ENCODE measurements at regions of chr2 and their contacts with region 1.

Region 1: DNA sequence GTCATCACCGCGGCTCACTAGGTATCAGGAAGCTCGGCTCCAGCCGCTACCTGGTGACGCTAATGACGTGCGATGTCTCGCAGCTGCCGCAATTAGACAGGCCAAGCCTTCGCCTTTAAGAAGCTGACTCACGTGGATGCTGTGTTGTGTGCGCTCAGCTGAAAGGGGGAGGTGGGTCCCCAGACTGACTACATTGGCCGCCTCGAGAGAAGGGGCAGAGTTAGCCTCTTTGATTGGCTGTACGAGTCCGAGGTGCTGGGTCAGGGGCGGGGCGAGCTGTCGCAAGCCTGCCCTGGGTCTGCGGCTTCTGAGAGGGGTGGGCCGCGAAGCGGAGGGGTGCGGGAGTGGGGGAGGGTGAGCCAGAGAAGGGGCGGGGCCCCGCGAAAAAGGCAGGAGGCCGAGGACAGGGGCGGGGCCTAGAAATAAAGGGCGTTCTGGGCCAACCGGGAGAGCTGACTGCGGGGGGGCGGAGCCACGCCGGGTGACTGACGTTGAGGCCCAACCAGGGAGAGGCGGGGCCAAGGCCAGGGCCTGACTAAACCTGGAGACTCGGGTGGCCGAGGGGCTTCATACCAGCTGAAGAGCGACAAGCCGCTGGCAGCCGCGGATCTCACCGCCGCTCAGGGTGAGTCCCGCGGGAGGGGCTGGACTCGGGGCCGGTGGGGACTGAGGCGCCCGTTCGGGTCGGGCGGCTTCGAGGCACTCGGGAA is at the start of gene YPEL5:
- DNase-seq: peak; percentile 99
- H3K4me3 Mint-ChIP-seq: peak within 1 kb of the TSS; percentile 84
- H3K27ac Mint-ChIP-seq: peak within 1 kb of the TSS; percentile 95
- H3K4me1 Mint-ChIP-seq: peaks cover 56% of the 10 kb centered on the region
- H3K27me3 Mint-ChIP-seq: no peaks in the 10 kb centered on the region
- total RNA-seq, gene YPEL5: 28.4 to 33.3 TPM

Region 2: GRCh38 chr2:28751252-28751955 is 1395.2 kb before region 1 on chr2 and contains the start of gene PPP1CB:
- CTCF ChIA-PET with region 1: no interaction called
- intact Hi-C with region 1: loop called (anchors 5 kb)
- DNase-seq: peak; percentile 94
- H3K4me3 Mint-ChIP-seq: peak within 1 kb of the TSS; percentile 91
- H3K27ac Mint-ChIP-seq: peak within 1 kb of the TSS; percentile 95
- H3K4me1 Mint-ChIP-seq: peaks cover 50% of the 10 kb centered on the region
- H3K27me3 Mint-ChIP-seq: no peaks in the 10 kb centered on the region
- total RNA-seq, gene PPP1CB: 235 to 239 TPM

Region 3: DNA sequence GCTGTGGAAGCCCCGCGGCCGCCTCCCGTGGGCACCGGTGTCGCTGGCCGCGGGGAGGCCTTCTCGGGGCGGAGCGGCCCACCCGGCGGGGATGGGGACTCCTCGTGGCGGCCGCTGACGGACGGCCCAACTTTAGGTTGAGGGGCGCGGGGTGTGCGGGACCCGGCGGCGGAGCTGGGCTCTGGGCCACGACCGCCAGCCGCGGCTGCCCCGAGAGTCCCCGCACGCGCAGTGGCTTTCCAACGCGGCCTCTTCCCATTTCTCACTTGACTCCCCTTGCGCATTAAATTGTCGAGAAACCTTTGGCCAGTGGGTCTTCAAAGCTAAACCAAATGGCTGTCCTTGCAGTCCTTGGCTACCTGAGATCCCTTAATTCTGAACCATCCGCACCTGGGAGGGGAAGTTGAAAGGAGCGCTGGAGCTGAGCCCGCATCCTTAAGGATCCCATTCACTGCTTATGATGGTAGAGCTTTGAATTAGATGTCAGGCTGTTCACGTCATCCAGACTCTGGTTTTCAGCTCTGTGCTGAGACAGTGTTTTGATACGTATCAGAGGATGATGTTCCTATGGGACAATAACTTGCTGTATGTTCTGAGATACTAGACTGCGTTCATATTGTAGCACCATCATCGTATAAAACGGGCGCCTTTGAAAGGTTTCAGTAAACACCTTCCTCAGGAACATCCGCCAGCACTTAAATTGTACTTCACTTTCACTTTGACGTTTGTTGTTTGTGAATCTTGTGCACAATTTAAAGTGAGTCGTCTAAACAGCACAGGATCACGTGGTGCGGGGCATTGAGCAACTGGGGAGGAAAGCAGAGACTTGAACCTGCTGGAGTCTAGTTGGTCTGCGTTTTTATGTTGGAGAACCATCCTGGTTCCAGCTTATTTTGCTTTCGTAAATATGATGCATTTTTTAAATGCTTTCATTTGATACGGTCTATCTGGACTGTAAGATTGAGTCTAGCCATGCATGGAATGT is 1030.5 kb before region 1 on chr2:
- CTCF ChIA-PET with region 1: no interaction called
- intact Hi-C with region 1: loop called (anchors 5 kb)
- DNase-seq: peak; percentile 90
- H3K4me3 Mint-ChIP-seq: peak overlapping the region; percentile 90
- H3K27ac Mint-ChIP-seq: peak overlapping the region; percentile 87
- H3K4me1 Mint-ChIP-seq: peaks cover 52% of the 10 kb centered on the region
- H3K27me3 Mint-ChIP-seq: peaks cover 3% of the 10 kb centered on the region

Region 4: DNA sequence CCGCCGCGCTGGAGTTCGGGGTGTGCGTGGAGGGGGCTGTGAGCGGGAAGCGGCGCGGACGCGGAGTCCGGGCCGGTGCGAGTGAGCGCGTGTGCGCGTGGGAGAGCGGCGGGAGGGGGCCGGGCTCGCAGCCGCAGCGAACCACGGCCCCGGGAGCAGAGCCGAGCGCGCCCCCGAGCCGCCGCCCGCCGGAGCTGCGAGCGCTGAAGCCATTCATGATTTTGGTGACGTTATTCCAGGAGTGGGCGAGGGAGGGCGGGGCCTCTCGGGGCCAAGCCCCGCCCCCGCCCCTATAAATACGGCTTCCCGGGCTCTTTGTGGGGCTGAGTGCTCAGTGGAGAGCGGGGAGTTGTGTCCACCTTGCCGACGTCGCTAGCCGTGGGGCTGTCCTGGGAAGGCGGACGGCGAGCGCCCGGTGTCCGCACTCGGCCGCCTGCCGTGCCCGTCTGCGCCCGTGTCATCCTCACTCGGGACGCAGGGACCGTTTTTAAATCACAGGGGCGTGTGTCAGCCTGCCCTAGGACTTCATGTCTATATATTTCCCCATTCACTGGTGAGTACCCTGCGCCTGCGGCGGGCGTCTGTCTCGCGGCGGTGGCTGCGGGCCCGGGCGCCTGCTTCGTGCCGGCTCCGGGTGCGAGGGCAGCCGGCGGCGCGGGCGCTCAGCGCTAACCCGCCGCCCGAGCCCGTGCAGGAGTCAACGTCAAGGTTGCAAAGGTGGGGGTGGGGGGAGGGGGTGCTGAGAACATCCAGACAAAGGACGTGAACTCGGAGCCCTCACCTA is 84.8 kb after region 1 on chr2 and contains the start of gene LBH:
- CTCF ChIA-PET with region 1: interaction called, 4 read pairs
- intact Hi-C with region 1: loop called (anchors 1 kb)
- DNase-seq: peak; percentile 90
- H3K4me3 Mint-ChIP-seq: peak within 1 kb of the TSS; percentile 83
- H3K27ac Mint-ChIP-seq: peak within 1 kb of the TSS; percentile 74
- H3K4me1 Mint-ChIP-seq: peaks cover 56% of the 10 kb centered on the region
- H3K27me3 Mint-ChIP-seq: peaks cover 3% of the 10 kb centered on the region
- total RNA-seq, gene LBH: 71.4 to 75.3 TPM

Region 5: GRCh38 chr2:31233741-31234682 is 1087.4 kb after region 1 on chr2 and contains the start of gene EHD3:
- CTCF ChIA-PET with region 1: no interaction called
- intact Hi-C with region 1: loop called (anchors 5 kb)
- DNase-seq: peak; percentile 89
- H3K4me3 Mint-ChIP-seq: peak within 1 kb of the TSS; percentile 64
- H3K27ac Mint-ChIP-seq: no peak within 1 kb of the TSS
- H3K4me1 Mint-ChIP-seq: peaks cover 14% of the 10 kb centered on the region
- H3K27me3 Mint-ChIP-seq: no peaks in the 10 kb centered on the region
- total RNA-seq, gene EHD3: 0.67 to 0.74 TPM

Measured in activated naive CD4-positive, alpha-beta T cell treated with anti-CD3 and anti-CD28 coated beads for 36 hours (primary cell).